Vagina (tissue), 2 donors: ENCODE measurements at regions of chr16 and their contacts with region 1.

Region 1: GRCh38 chr16:4116337-4117249 is at the start of gene ADCY9:
- DNase-seq: no peak
- H3K4me3 ChIP-seq: peak within 1 kb of the TSS; percentile 79 to 81
- H3K27ac ChIP-seq: peak within 1 kb of the TSS; percentile 91
- H3K4me1 ChIP-seq: peaks cover 50% of the 10 kb centered on the region
- H3K27me3 ChIP-seq: no peaks in the 10 kb centered on the region
- CTCF ChIP-seq: no peak
- POLR2A ChIP-seq: peak in 1 of 2 donors; percentile 20
- total RNA-seq, gene ADCY9: 16.9 TPM

Region 2: DNA sequence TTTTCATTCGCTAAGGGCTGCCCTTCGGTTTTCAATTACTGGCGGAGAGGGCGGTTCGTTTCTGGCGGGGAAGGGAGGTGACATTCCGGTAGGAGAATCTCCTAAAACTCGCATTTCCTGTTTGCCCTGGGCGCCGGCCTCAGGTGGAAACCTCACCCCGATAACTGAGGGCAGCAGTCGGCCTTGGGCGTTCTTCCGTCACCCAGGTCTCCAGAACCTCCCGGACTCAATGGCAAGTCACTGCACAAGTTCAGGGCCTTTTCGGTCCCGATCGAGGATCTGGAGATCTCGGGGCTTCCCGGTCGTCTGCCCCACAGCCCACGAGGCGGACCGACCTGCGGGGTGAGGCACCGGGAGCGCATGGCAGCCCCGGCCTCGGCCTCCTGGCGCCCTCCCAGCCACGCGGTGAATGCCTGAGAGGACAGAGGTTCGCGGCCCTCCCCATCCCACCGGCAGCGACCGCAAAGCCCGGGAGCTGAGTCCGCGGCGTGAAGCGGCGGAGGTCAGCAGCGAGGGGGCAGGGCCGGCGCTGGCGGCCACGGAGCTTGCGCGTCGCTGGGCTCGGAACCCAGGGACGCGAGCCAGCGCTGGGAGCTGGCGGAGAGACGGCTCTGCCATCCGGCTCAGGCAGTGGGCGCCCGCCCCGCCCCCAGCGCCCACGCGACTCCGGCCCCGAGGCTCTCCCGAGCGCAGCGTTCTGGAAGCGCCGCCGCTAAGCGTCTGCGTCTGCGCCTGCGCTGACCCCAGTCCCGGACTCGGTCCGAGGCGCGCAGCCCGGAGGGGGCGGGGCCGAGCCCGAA is 66.8 kb after region 1 on chr16:
- intact Hi-C with region 1: loop called (anchors 10 kb)
- DNase-seq: peak in 1 of 2 donors; percentile 90
- H3K4me3 ChIP-seq: peak overlapping the region; percentile 48 to 80
- H3K27ac ChIP-seq: peak overlapping the region; percentile 95
- H3K4me1 ChIP-seq: peaks cover 8% of the 10 kb centered on the region
- H3K27me3 ChIP-seq: no peaks in the 10 kb centered on the region
- CTCF ChIP-seq: no peak
- POLR2A ChIP-seq: peak; percentile 10 to 77

Region 3: DNA sequence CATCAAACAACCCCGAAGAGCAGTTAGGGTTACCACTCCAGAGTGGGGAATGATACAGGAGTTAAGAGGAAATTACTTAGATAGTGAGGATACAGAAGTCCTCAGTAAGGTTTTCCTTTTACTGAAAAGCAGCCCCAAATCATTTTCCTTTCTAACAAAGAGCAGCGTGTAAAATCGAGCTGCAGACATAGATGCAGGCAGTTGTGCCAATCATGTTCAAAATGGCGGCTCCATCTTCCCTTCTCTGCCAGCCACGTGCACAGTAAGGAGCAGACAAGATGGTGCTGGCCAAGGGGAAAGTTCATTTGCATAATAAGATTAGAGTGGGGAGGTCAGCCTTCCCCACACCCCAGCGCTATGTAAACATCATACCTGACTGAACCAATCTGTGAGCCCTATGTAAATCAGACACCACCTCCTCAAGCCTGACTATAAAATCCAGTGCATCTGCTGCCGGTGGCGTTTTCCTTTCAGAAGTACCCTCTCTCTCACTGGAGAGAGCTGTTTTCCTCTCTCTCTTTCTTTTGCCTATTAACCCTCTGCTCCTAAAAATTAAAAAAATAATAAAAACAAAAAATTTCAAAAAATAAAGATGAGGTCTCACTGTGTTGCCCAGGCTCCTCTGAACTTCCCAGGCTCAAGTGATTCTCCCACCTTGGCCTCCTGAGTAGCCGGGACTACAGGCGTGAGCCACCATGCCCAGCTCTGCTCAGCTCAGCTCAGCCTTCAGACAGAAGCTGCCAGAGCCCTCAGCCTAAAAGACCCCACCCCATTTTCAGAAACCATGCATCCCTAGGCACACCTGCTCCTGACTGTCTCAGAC is 127.9 kb after region 1 on chr16:
- intact Hi-C with region 1: loop called (anchors 10 kb)
- DNase-seq: no peak
- H3K4me3 ChIP-seq: no peak overlapping the region
- H3K27ac ChIP-seq: no peak overlapping the region
- H3K4me1 ChIP-seq: no peaks in the 10 kb centered on the region
- H3K27me3 ChIP-seq: no peaks in the 10 kb centered on the region
- CTCF ChIP-seq: no peak
- POLR2A ChIP-seq: no peak